ENCODE measurements at regions of chr1 and their contacts with region 1.

Region 1: GRCh38 chr1:174022080-174022975 is at the start of gene RC3H1:
- DNase-seq: peak; percentile 96
- H3K4me3 Mint-ChIP-seq: peak within 1 kb of the TSS; percentile 93
- H3K27ac Mint-ChIP-seq: peak within 1 kb of the TSS; percentile 94
- H3K4me1 Mint-ChIP-seq: peaks cover 33% of the 10 kb centered on the region
- H3K27me3 Mint-ChIP-seq: peaks cover 2% of the 10 kb centered on the region
- total RNA-seq, gene RC3H1: 41.7 and 43.3 TPM in 2 replicates

Region 2: GRCh38 chr1:173429471-173430402 is 592.6 kb before region 1 on chr1:
- intact Hi-C with region 1: loop called (anchors 2 kb)
- DNase-seq: peak; percentile 88
- H3K4me3 Mint-ChIP-seq: peak overlapping the region; percentile 74
- H3K27ac Mint-ChIP-seq: peak overlapping the region; percentile 66
- H3K4me1 Mint-ChIP-seq: peaks cover 18% of the 10 kb centered on the region
- H3K27me3 Mint-ChIP-seq: no peaks in the 10 kb centered on the region

Region 3: GRCh38 chr1:173714759-173715537 is 307.4 kb before region 1 on chr1 and contains the start of gene KLHL20:
- intact Hi-C with region 1: loop called (anchors 2 kb)
- DNase-seq: peak; percentile 96
- H3K4me3 Mint-ChIP-seq: peak within 1 kb of the TSS; percentile 96
- H3K27ac Mint-ChIP-seq: peak within 1 kb of the TSS; percentile 95
- H3K4me1 Mint-ChIP-seq: peaks cover 18% of the 10 kb centered on the region
- H3K27me3 Mint-ChIP-seq: peaks cover 23% of the 10 kb centered on the region
- total RNA-seq, gene KLHL20: 15.4 and 17.1 TPM in 2 replicates

Region 4: DNA sequence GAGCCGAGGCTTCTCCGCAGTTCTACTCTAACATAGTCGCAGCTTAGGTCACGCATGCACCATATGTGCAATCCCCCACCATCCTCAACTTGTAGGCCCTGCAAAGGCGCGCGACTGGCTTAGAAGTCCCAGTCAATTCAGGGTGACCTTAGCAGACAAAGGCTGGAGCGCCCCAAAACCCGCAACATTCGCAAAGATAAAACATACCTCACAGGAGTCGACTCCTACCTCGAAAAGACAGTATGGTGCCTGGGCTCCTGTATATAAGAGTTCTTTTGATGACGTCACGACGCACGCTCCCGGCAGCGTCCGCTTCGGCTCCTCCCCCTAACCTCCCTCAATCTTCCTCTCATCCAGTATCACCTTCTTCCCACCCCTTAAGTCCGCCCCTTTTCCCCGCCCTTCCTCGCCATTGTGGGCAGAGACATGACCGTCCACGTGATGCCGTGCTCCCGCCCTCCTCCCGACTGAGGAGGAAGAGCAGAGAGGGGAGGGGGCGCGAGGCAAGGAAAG is 154.5 kb before region 1 on chr1 and contains the start of gene GAS5:
- intact Hi-C with region 1: loop called (anchors 1 kb)
- DNase-seq: peak; percentile 100
- H3K4me3 Mint-ChIP-seq: peak within 1 kb of the TSS; percentile 92
- H3K27ac Mint-ChIP-seq: peak within 1 kb of the TSS; percentile 99
- H3K4me1 Mint-ChIP-seq: peaks cover 57% of the 10 kb centered on the region
- H3K27me3 Mint-ChIP-seq: no peaks in the 10 kb centered on the region
- total RNA-seq, gene GAS5: 695 and 703 TPM in 2 replicates

Region 5: DNA sequence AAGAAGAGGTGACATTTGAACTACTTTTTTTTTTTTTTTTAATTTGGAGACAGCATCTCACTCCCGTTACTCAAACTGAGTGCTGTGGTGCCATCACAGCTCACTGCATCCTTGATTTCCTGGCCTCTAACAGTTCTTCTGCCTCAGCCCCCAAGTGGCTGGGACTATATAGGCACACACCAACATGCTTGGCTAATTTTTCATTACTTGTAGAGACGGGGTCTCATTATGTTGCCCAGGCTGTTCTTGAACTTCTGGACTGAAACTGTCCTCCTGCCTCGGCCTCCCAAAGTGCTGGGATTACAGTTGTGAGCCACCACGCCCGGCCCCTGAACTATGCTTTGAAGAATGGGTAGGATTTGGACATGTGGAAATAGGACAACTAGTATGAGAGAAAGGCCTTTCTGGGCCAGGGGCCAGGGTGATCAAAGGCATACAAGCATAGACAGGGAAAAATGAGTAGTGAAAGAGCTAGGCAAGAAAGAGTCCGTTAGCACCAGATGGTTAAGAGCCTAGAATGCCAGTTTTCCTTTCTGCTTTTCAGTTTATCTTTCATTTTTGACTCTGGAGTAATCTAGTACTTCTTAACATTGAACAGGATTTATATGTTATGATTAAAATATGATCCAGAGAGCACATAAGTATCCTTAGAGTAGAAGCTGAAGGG is 143.3 kb after region 1 on chr1:
- intact Hi-C with region 1: no loop called
- DNase-seq: no peak
- H3K4me3 Mint-ChIP-seq: no peak overlapping the region
- H3K27ac Mint-ChIP-seq: no peak overlapping the region
- H3K4me1 Mint-ChIP-seq: peaks cover 40% of the 10 kb centered on the region
- H3K27me3 Mint-ChIP-seq: no peaks in the 10 kb centered on the region

Region 6: GRCh38 chr1:174204697-174205308 is 182.5 kb after region 1 on chr1:
- intact Hi-C with region 1: no loop called
- DNase-seq: no peak
- H3K4me3 Mint-ChIP-seq: peak overlapping the region; percentile 1
- H3K27ac Mint-ChIP-seq: peak overlapping the region; percentile 62
- H3K4me1 Mint-ChIP-seq: peaks cover 37% of the 10 kb centered on the region
- H3K27me3 Mint-ChIP-seq: no peaks in the 10 kb centered on the region

Region 7: DNA sequence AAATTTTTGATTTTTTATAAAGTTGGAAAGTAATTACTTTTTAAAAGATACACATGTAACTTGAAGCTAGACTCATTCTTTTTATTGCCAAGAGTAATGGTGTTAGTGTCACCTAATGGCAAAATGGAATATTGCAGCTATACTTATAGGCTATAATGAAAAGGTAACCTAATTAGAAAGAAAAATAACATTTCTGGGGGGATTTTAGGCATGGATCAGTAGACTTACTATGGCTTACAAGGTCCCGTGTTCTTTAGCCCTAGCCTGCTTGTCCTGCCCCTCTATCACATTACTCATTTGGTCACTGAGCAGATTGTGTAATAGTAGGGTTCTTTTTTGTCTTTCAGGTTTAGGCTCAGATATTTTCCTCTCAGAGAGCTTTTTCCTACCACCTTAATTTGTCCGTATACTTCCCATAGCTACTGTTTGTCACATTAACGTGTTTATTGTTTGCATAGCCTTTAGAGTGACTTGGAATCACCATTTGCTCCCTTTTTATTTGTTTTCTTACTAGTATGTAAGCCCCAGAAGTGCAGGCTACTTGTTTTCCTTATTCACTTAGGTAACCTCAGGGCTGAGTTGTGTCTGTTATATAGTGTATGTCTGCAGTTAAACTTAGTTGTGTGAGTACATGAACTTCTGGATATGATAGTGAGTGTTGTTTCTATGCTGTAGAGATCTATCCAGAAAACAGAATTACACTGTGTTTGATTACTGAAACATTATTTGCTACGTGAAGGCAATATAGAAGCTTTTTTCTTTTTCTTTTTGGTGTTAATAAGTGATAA is 195.7 kb after region 1 on chr1:
- intact Hi-C with region 1: loop called (anchors 5 kb)
- DNase-seq: peak; percentile 57
- H3K4me3 Mint-ChIP-seq: no peak overlapping the region
- H3K27ac Mint-ChIP-seq: no peak overlapping the region
- H3K4me1 Mint-ChIP-seq: no peaks in the 10 kb centered on the region
- H3K27me3 Mint-ChIP-seq: no peaks in the 10 kb centered on the region